ENCODE measurements at regions of chr12 and their contacts with region 1.

Region 1: DNA sequence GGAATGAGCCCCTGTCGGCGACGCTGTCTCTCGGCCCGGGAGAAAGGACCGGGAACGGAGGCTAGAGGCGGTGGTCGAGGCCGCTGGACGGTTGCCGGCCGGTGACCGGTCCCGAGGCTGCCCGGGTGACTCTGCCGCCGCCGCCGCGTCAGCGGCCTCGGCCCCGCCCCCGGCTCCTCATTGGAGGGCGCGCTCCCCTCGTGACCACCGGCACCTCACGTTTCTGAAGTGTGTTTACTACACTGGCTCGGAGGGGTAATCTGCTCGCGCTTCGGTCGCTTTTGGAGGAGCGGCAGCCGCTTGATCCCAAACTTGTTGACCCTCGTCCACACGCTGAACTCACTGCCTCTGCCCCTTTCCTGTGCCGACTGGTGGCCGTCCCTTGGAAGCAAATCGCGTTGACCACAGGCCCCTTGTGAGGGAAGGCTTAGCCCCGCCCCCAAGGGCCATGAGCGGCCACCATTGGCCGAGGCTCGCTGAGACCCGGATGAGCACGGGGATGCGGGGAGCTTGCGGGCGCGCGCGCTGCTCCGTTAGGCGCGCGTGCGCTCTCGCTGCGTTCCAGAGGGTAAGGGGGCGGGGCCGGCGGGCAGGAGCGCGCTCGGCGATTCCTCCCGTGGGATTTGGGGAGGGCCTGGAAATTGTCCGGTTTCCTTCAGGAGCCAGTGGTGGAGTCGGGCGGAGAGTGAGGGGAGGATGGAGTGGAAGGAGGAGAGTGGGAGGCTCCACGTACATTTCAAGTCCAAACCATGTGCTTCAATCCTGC is at the start of gene CRY1:
- DNase-seq: peak; percentile 96 to 98 (median 98)
- H3K4me3 ChIP-seq: peak within 1 kb of the TSS; percentile 76
- H3K27ac ChIP-seq: peak within 1 kb of the TSS; percentile 94 to 97
- H3K4me1 ChIP-seq: no peaks in the 10 kb centered on the region
- H3K27me3 ChIP-seq: no peaks in the 10 kb centered on the region
- CTCF ChIP-seq: peak in 1 of 3 donors; percentile 42
- EP300 ChIP-seq: no peak
- POLR2A ChIP-seq: peak; percentile 98
- total RNA-seq, gene CRY1: 11.9 to 49.1 (median 15.0) TPM

Region 2: DNA sequence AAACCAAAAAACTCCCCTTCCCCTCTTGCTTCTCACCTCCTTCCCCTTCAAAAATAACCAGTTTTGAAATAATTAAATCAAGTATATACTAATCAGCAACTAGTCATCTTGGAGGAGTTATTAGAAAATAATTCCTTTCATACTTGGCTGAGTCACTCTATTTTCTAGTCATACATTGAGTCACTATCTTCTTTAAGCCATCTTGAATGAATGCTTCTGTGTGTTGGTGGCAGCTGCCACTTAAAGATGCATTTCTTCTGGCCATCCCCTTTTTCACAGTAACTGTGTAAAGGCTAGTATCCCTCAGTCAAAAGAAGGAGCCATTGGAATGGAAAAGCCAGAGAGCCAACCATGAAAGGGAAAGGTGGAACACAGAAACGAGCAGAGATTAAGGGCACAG is 222.1 kb before region 1 on chr12:
- intact Hi-C with region 1: no loop called
- DNase-seq: no peak
- H3K4me3 ChIP-seq: no peak overlapping the region
- H3K27ac ChIP-seq: no peak overlapping the region
- H3K4me1 ChIP-seq: peaks cover 3% of the 10 kb centered on the region
- H3K27me3 ChIP-seq: no peaks in the 10 kb centered on the region
- CTCF ChIP-seq: no peak
- EP300 ChIP-seq: no peak
- POLR2A ChIP-seq: no peak

Region 3: GRCh38 chr12:106955377-106956047 is 138.1 kb before region 1 on chr12 and contains the start of gene TMEM263:
- intact Hi-C with region 1: loop called in 2 of 4 experiments (anchors 2 to 10 kb)
- DNase-seq: peak; percentile 96 to 98 (median 97)
- H3K4me3 ChIP-seq: peak within 1 kb of the TSS; percentile 96
- H3K27ac ChIP-seq: peak within 1 kb of the TSS; percentile 63 to 99
- H3K4me1 ChIP-seq: peaks cover 2% of the 10 kb centered on the region
- H3K27me3 ChIP-seq: no peaks in the 10 kb centered on the region
- CTCF ChIP-seq: peak in 1 of 3 donors; percentile 24
- EP300 ChIP-seq: no peak
- POLR2A ChIP-seq: peak; percentile 93
- total RNA-seq, gene TMEM263: 37.8 to 55.7 (median 49.7) TPM

Region 4: GRCh38 chr12:106986625-106987430 is 106.8 kb before region 1 on chr12 and contains the start of gene MTERF2:
- intact Hi-C with region 1: loop called in 3 of 4 experiments (anchors 5 to 10 kb)
- DNase-seq: peak; percentile 90 to 93 (median 92)
- H3K4me3 ChIP-seq: peak within 1 kb of the TSS; percentile 64
- H3K27ac ChIP-seq: peak within 1 kb of the TSS; percentile 82 to 90
- H3K4me1 ChIP-seq: peaks cover 7% of the 10 kb centered on the region
- H3K27me3 ChIP-seq: no peaks in the 10 kb centered on the region
- CTCF ChIP-seq: no peak
- EP300 ChIP-seq: peak; percentile 53
- POLR2A ChIP-seq: peak; percentile 71
- total RNA-seq, gene MTERF2: 11.7 to 21.9 (median 15.3) TPM

Region 5: DNA sequence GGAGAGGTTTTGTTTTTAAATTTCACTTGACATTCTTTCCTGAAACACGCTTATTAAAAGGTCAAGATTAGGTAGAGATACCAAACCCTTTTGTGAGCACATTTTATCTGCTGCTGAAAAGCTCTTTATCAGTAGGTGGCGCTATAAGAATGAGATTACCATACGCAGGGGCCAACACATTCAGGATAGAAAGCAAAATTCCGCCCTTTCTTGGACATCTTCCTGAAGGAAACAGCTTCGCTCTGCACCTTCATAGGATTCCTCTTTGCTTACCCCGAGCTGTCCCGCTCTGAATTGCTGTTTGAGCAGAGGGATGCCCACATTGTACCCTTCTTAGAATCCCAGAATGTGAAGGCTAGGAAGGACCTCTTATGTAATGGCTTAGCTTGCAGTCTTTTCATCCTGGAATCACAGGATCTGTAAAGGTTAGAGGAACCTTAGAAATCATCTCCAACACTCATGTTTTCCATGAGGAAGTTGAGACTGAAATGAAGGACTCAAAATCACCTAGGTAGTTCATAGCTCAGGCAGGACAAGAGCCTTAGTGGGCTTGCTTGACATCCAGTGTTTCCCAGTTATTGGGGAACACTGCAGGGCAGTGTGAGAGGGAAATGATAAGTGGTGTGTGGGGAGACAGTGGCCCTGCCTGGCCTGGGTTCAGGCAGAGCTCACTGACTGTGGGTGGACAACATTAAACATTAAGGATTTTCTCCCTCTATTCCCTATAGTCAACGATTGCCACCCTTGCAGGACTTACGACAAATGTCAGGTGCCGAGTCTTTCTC is 38.4 kb after region 1 on chr12:
- intact Hi-C with region 1: no loop called
- DNase-seq: no peak
- H3K4me3 ChIP-seq: no peak overlapping the region
- H3K27ac ChIP-seq: no peak overlapping the region
- H3K4me1 ChIP-seq: no peaks in the 10 kb centered on the region
- H3K27me3 ChIP-seq: no peaks in the 10 kb centered on the region
- CTCF ChIP-seq: peak in 1 of 3 donors; percentile 20
- EP300 ChIP-seq: no peak
- POLR2A ChIP-seq: no peak

Region 6: GRCh38 chr12:107296681-107297089 is 203.1 kb after region 1 on chr12:
- intact Hi-C with region 1: no loop called
- DNase-seq: no peak
- H3K4me3 ChIP-seq: no peak overlapping the region
- H3K27ac ChIP-seq: no peak overlapping the region
- H3K4me1 ChIP-seq: no peaks in the 10 kb centered on the region
- H3K27me3 ChIP-seq: no peaks in the 10 kb centered on the region
- CTCF ChIP-seq: no peak
- EP300 ChIP-seq: no peak
- POLR2A ChIP-seq: no peak

Measured in ovary (tissue), 10 donors.